ENCODE measurements at regions of chr3 and their contacts with region 1.

Region 1: DNA sequence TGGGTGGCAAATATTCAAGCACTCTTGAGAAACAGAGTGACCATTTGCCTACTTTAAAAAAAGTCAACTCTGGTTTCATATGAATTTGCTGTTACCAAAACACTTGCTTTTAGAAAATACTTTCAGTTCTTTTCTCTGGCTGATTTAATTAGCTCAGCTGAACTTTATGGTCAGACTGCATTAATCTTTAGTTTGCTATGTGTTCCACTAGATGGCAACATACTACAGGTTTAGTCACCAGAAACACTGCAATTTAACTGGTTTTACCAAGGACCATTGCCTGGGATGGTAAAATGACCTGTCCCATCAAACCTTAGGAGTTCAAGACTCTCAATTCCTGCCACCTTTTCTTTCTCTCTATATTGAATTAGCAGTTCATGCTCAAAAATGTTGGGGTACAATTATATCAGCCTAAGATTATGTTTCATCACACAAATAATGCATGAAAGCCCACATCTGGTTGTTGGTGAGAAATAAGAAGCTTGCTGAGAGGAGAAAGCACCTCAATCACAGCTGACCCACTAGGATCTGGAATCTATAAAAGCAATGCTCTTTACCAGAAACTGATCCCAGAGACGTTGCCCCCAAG is 14.2 kb downstream of the EIF4E3 start:
- DNase-seq: no peak
- H3K4me3 Mint-ChIP-seq: no peak overlapping the region
- H3K27ac Mint-ChIP-seq: no peak overlapping the region
- H3K4me1 Mint-ChIP-seq: peaks cover 67% of the 10 kb centered on the region
- H3K27me3 Mint-ChIP-seq: no peaks in the 10 kb centered on the region

Region 2: DNA sequence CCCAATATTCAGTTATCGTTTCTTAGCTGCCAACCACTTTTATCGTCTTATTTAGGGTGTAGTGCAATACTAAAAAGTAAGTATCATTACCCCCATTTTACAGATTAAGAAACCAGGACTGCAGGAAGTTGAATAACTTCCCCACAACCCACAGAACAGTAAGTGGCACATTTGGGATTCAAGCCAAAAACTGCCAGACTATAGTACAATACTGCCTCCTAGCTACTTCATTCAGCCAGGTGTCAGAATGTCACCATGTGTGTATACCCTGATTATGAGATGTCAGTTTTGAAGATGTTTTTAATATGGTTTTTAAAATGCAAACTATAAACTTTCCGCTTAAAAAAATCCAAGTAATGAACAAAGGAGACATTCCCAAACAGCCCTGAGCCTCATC is 148.1 kb after region 1 on chr3:
- CTCF ChIA-PET with region 1: interaction called, 19 read pairs
- POLR2A ChIA-PET with region 1: no interaction called
- DNase-seq: no peak
- H3K4me3 Mint-ChIP-seq: no peak overlapping the region
- H3K27ac Mint-ChIP-seq: no peak overlapping the region
- H3K4me1 Mint-ChIP-seq: peaks cover 7% of the 10 kb centered on the region
- H3K27me3 Mint-ChIP-seq: peaks cover 13% of the 10 kb centered on the region

Region 3: DNA sequence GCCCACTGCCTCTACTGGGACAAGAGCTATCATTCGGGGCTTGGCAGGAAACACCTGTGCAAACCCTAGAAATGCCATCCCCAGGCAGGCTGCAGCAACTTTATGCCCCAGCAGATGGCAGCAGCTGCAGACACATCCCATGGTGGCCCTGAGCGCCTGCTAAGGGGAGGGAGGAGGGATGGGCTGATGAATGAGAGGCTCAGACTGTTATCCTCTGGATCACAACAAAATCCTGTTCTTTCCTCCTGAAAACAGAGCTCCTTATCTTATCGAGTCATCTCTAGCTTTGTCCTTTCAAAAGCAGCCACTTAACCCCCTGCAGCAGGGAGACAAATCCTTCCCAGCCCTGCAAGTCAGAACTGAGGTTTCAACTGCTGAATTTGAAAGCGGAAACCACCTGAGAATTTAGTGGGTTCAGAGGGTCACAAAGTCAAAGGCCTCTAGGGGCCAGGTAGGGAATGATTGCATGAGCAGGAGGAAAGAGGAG is 164.5 kb after region 1 on chr3:
- CTCF ChIA-PET with region 1: interaction called, 17 read pairs
- POLR2A ChIA-PET with region 1: no interaction called
- DNase-seq: peak; percentile 83
- H3K4me3 Mint-ChIP-seq: no peak overlapping the region
- H3K27ac Mint-ChIP-seq: peak overlapping the region; percentile 21
- H3K4me1 Mint-ChIP-seq: peaks cover 33% of the 10 kb centered on the region
- H3K27me3 Mint-ChIP-seq: peaks cover 2% of the 10 kb centered on the region

Region 4: GRCh38 chr3:72100601-72101187 is 389.7 kb after region 1 on chr3:
- CTCF ChIA-PET with region 1: no interaction called
- POLR2A ChIA-PET with region 1: no interaction called
- DNase-seq: peak; percentile 89
- H3K4me3 Mint-ChIP-seq: peak overlapping the region; percentile 70
- H3K27ac Mint-ChIP-seq: peak overlapping the region; percentile 64
- H3K4me1 Mint-ChIP-seq: peaks cover 29% of the 10 kb centered on the region
- H3K27me3 Mint-ChIP-seq: peaks cover 3% of the 10 kb centered on the region

Region 5: GRCh38 chr3:72214066-72214951 is 503.3 kb after region 1 on chr3:
- CTCF ChIA-PET with region 1: no interaction called
- POLR2A ChIA-PET with region 1: no interaction called
- DNase-seq: no peak
- H3K4me3 Mint-ChIP-seq: no peak overlapping the region
- H3K27ac Mint-ChIP-seq: no peak overlapping the region
- H3K4me1 Mint-ChIP-seq: no peaks in the 10 kb centered on the region
- H3K27me3 Mint-ChIP-seq: peaks cover 6% of the 10 kb centered on the region